Activated B cell treated with CpG ODN at 0.5 μM for 24 hours (primary cell): ENCODE measurements at regions of chr22 and their contacts with region 1.

Region 1: DNA sequence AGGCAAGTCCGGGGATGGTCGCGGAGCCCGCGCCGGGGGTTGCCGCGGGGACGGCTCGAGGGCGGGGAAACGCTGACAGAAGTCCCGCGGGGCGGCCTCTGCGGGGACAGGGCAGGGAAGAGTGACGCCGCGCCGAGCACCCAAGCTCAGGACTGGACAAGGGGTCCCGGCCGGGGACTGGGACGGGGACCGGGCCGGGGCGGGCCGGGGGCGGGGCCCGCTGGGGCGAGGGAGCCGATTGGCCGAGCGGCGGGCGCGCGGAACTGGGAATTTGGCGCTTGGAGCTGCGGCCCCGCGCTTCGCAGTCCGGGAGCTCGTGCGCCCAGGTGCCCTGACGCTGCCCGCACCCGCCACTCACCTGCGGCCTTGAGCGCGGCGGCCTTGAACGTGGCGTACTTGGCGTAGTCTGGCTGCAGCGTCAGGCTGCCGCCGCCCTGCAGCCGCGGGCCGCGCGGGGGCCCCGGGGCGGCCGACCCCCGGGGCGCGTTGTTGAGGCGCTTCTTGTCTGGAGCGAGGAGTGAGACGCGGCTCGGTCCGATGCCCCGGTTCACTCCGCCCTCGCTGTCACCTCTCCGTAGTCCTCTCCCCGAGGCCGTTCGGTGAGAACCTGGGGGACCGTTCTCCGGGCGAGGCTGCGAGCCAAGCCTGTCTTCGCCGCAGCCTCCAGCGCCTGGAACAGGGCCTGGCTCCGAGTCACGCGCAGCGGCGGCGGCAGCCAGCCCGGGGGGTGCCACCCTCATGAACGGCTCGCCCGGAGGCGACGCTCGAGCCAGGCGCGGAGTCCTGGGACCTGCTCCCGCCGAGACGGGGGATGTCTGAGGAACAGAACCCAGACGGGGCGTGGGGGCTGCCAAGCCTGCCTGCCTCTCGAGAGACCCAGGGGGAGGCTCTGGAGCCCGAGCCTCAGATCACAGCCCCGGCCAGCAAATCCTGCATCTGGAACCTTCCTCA is 4.5 kb downstream of the SHISA8 start:
- DNase-seq: peak; percentile 57
- ATAC-seq: peak; percentile 15
- H3K4me3 Mint-ChIP-seq: peak overlapping the region; percentile 68
- H3K27ac Mint-ChIP-seq: no peak overlapping the region
- H3K4me1 Mint-ChIP-seq: peaks cover 48% of the 10 kb centered on the region
- H3K27me3 Mint-ChIP-seq: peaks cover 10% of the 10 kb centered on the region
- CTCF ChIP-seq: no peak

Region 2: DNA sequence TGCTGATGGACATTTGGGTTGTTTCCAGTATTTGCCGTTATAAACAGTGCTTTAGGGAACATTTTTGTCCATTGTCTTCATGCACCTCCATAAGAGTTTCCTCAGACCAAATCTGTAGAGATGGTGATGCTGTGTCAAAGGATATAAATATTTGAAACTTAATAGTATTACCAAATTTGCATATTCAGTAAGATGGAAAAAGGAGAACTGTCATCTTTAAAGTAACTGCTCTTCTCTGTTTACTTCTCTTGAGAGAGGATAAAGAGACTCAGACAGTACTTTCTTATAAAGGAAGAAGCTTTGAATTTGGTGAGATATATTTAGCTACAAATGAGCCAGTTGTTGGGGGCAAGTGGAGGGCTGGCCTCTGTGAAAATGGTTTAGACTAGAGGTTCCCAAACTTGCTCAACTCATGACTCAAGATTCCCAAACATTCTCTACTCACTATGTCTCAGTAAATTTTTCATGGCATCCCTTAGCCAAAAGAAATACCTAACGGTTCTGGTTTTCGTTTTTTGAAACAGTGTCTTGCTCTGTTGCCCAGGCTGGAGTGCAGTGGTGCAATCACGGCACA is 21.6 kb before region 1 on chr22:
- CTCF ChIA-PET with region 1: no interaction called
- POLR2A ChIA-PET with region 1: interaction called, 4 read pairs
- intact Hi-C with region 1: loop called (anchors 2 kb)
- DNase-seq: no peak
- ATAC-seq: peak; percentile 28
- H3K4me3 Mint-ChIP-seq: peak overlapping the region; percentile 4
- H3K27ac Mint-ChIP-seq: peak overlapping the region; percentile 74
- H3K4me1 Mint-ChIP-seq: peaks cover 59% of the 10 kb centered on the region
- H3K27me3 Mint-ChIP-seq: no peaks in the 10 kb centered on the region
- CTCF ChIP-seq: no peak

Region 3: DNA sequence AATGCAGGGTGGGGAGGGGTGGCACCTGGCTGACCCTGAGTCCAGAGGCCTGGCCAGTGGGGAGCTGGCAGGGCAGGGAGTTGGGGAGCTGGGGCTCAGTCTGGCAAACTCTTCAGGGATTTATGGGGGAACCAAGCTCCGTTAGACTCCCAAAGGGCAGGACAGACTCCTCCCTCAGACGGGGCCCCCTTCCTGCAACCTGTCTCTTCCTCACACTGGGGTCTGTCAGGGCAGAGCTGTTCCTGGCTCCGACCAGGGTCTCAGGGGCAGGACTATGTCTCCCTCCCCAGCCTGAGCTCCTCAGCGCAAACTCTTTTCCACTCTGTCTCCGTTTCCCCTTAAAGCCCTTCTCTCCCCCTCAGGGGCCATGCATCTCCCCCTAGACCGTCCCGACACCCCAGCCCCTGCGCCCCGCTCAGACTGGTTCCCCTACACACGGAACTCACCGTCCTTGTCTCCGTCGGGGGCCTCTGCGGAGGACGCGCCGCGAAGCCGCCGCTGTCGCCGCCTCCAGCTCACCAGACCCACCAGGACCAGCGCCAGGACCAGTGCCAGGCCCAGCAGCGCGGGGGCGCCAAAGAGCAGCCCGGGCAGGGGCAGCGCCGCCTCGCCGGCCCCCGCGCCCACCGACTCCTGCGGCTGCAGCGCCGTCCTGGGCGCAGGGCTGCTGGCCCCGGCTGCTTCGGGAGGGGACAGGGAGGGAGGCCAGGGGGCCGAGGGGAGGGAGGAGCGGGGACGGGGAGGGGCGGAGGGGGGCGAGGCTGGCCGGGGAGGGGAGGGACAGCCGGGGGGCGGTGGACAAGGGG is 15.5 kb after region 1 on chr22:
- CTCF ChIA-PET with region 1: no interaction called
- POLR2A ChIA-PET with region 1: interaction called, 173 read pairs
- intact Hi-C with region 1: loop called (anchors 2 kb)
- DNase-seq: peak; percentile 90
- ATAC-seq: peak; percentile 45
- H3K4me3 Mint-ChIP-seq: peak overlapping the region; percentile 92
- H3K27ac Mint-ChIP-seq: peak overlapping the region; percentile 94
- H3K4me1 Mint-ChIP-seq: peaks cover 83% of the 10 kb centered on the region
- H3K27me3 Mint-ChIP-seq: no peaks in the 10 kb centered on the region
- CTCF ChIP-seq: peak; percentile 26

Region 4: GRCh38 chr22:42202669-42203068 is 292.3 kb after region 1 on chr22:
- CTCF ChIA-PET with region 1: no interaction called
- POLR2A ChIA-PET with region 1: no interaction called
- intact Hi-C with region 1: no loop called
- DNase-seq: no peak
- ATAC-seq: no peak
- H3K4me3 Mint-ChIP-seq: no peak overlapping the region
- H3K27ac Mint-ChIP-seq: no peak overlapping the region
- H3K4me1 Mint-ChIP-seq: peaks cover 30% of the 10 kb centered on the region
- H3K27me3 Mint-ChIP-seq: no peaks in the 10 kb centered on the region
- CTCF ChIP-seq: no peak

Region 5: DNA sequence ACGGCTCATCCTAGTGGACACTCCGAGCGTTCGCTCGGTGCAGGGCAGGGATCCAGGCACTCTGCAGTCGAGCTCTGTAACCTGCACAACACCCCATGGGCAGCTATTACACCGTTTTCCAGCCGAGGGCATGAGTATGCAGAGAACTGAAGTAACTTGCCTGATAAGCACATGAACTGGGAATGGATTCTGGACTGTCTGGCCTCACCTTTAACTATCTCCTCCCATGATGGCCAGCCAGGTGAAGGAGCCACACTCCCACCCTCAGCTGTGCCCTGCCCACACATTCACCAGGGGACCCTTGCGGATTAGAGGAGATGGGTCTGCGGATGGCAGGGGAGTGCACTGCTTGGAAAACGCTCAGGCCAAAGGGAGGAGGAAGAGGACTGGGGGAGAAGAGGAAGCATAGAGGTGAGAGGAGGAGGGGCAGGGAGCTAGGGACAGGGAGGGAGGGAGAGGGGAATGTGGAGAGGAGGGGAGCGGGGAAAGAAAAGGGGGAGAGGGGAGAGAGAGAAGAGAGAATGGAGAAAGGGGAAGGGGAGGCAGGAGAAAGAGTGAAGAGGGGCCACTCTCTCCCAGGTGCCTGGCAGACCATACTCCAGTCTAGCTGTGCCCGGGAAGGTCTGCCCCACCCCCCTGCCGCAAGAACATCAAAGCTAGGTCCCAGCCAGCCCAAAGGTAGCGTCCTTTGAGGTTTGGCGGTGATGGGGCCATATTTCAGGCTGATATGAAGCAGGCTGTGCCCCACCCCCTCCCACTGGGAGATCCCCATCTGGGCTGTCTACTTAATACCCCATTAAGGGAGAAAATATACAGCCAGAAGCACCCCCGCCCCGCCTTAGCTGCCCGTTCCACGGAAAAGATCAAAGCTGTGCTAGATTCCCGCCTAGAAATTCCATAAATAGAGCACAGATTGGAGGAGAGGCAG is 393.3 kb after region 1 on chr22:
- CTCF ChIA-PET with region 1: no interaction called
- POLR2A ChIA-PET with region 1: no interaction called
- intact Hi-C with region 1: no loop called
- DNase-seq: no peak
- ATAC-seq: no peak
- H3K4me3 Mint-ChIP-seq: no peak overlapping the region
- H3K27ac Mint-ChIP-seq: peak overlapping the region; percentile 16
- H3K4me1 Mint-ChIP-seq: peaks cover 27% of the 10 kb centered on the region
- H3K27me3 Mint-ChIP-seq: peaks cover 3% of the 10 kb centered on the region
- CTCF ChIP-seq: no peak